Activated CD8-positive, alpha-beta T cell treated with anti-CD3 and anti-CD28 coated beads, Interleukin-2, amount 10 ng/mL, durations not matched to agents 7 days and 5 days (primary cell): ENCODE measurements at regions of chr10 and their contacts with region 1.

Region 1: DNA sequence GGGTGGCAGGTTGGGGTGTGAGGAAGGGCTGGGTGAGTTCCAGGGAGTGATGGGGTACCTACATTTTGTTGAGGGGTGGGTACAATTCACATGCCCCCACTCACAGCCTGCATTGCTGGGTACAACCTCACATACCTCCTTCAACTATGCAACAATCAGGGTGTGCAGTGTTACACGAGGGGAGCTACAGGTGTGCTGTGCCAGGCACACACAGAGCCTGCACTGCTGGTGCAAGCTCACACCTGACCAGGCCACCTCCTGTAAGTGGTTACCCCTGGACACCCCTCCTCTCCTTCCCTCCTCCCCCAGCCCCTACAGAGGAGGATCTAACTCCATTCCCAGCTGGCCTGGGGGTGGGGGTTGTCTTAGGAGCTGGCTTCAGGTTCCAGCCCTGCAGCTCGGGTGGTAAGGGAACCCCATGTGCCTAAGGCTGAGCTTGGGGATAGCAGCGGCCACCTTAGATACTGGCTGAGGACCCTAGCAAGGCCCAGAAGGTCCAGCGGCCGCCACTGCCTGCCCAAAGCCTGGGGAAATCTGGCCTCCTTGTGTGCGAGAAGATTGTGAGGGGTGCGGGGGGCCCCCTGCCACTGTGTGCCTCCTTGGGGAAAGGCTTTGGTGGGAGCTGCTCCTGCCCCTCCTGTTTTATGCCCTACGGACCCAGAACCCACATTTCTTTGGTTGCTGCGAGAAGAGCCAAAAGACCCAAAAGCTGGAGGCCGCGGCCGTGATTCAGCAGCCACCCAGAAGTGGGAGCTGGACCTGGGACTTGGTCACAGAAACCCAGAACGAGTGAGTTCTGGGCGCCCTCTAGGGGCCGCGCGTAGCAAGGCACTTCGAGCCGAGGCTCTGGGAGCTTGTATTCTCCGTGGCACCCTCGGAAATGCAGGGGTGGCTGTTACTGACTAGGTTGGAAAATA is 10.8 kb downstream of the TLX1 start:
- DNase-seq: peak; percentile 83
- ATAC-seq: peak; percentile 90
- H3K4me3 Mint-ChIP-seq: no peak overlapping the region
- H3K27ac Mint-ChIP-seq: no peak overlapping the region
- H3K4me1 Mint-ChIP-seq: peaks cover 5% of the 10 kb centered on the region
- H3K27me3 Mint-ChIP-seq: peaks cover 79% of the 10 kb centered on the region

Region 2: GRCh38 chr10:101042667-101043355 is 99.1 kb before region 1 on chr10:
- CTCF ChIA-PET with region 1: interaction called, 48 read pairs
- POLR2A ChIA-PET with region 1: no interaction called
- DNase-seq: peak; percentile 93
- ATAC-seq: peak; percentile 92
- H3K4me3 Mint-ChIP-seq: peak overlapping the region; percentile 91
- H3K27ac Mint-ChIP-seq: peak overlapping the region; percentile 93
- H3K4me1 Mint-ChIP-seq: peaks cover 31% of the 10 kb centered on the region
- H3K27me3 Mint-ChIP-seq: peaks cover 34% of the 10 kb centered on the region

Region 3: DNA sequence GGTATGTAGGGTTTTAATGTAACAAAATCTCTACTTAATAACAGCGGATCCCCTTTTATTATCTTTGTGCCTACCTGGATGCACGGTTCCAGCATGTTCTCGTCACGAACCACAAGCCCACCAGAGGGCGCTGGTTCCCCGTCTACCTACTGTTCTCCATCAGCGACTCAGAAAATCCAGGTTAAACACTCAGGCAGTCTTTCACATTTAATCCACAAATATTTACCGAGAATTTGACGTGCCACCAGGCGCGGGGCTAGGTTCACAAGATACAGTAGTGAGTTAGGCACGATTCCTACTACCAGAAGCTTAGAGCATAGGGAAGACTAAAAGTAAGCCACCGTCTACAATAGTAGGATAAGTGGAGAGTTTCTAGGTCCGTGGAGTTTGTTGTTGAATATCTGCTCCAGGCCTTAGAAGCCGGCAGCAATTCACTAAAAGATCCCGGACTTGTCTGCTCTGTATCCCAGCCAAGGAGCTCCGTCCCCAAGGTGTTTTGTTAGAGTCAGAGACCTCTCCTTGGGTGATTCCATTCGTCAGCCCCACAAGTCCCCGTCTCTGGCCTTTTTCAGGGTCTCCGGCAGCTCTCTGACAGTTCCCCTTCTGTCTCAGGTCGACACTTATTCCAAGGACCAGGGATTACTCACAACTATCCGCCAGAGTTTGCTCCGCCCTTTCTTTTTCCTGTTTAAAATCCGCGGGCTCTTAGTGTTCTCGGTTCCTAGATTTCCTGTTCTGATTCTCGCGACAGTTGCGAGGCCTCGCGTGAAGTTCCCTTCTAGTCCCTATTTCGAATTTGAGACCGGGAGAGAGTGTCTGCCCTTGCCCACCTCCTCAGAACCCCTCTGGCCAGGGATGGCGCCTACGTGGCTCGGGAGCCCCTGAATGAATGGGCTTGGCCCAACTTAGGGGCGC is 81.6 kb before region 1 on chr10:
- CTCF ChIA-PET with region 1: interaction called, 41 read pairs
- POLR2A ChIA-PET with region 1: no interaction called
- DNase-seq: peak; percentile 93
- ATAC-seq: peak; percentile 75
- H3K4me3 Mint-ChIP-seq: peak overlapping the region; percentile 88
- H3K27ac Mint-ChIP-seq: peak overlapping the region; percentile 96
- H3K4me1 Mint-ChIP-seq: peaks cover 47% of the 10 kb centered on the region
- H3K27me3 Mint-ChIP-seq: peaks cover 23% of the 10 kb centered on the region

Region 4: GRCh38 chr10:101080933-101081931 is 60.6 kb before region 1 on chr10:
- CTCF ChIA-PET with region 1: interaction called, 14 read pairs
- POLR2A ChIA-PET with region 1: no interaction called
- DNase-seq: no peak
- ATAC-seq: no peak
- H3K4me3 Mint-ChIP-seq: no peak overlapping the region
- H3K27ac Mint-ChIP-seq: no peak overlapping the region
- H3K4me1 Mint-ChIP-seq: no peaks in the 10 kb centered on the region
- H3K27me3 Mint-ChIP-seq: peaks cover 30% of the 10 kb centered on the region

Region 5: GRCh38 chr10:101120884-101121653 is 20.8 kb before region 1 on chr10:
- CTCF ChIA-PET with region 1: interaction called, 42 read pairs
- POLR2A ChIA-PET with region 1: no interaction called
- DNase-seq: peak; percentile 51
- ATAC-seq: peak; percentile 80
- H3K4me3 Mint-ChIP-seq: peak overlapping the region; percentile 80
- H3K27ac Mint-ChIP-seq: peak overlapping the region; percentile 78
- H3K4me1 Mint-ChIP-seq: peaks cover 27% of the 10 kb centered on the region
- H3K27me3 Mint-ChIP-seq: peaks cover 61% of the 10 kb centered on the region

Region 6: GRCh38 chr10:101155896-101156295 is 14.0 kb after region 1 on chr10:
- CTCF ChIA-PET with region 1: interaction called, 46 read pairs
- POLR2A ChIA-PET with region 1: no interaction called
- DNase-seq: no peak
- ATAC-seq: no peak
- H3K4me3 Mint-ChIP-seq: no peak overlapping the region
- H3K27ac Mint-ChIP-seq: no peak overlapping the region
- H3K4me1 Mint-ChIP-seq: no peaks in the 10 kb centered on the region
- H3K27me3 Mint-ChIP-seq: peaks cover 46% of the 10 kb centered on the region

Region 7: GRCh38 chr10:101214446-101215396 is 72.8 kb after region 1 on chr10:
- CTCF ChIA-PET with region 1: interaction called, 15 read pairs
- POLR2A ChIA-PET with region 1: no interaction called
- DNase-seq: peak; percentile 80
- ATAC-seq: peak; percentile 84
- H3K4me3 Mint-ChIP-seq: no peak overlapping the region
- H3K27ac Mint-ChIP-seq: no peak overlapping the region
- H3K4me1 Mint-ChIP-seq: peaks cover 24% of the 10 kb centered on the region
- H3K27me3 Mint-ChIP-seq: peaks cover 68% of the 10 kb centered on the region

Region 8: GRCh38 chr10:101266381-101267289 is 124.8 kb after region 1 on chr10:
- CTCF ChIA-PET with region 1: no interaction called
- POLR2A ChIA-PET with region 1: no interaction called
- DNase-seq: no peak
- ATAC-seq: no peak
- H3K4me3 Mint-ChIP-seq: no peak overlapping the region
- H3K27ac Mint-ChIP-seq: no peak overlapping the region
- H3K4me1 Mint-ChIP-seq: no peaks in the 10 kb centered on the region
- H3K27me3 Mint-ChIP-seq: peaks cover 22% of the 10 kb centered on the region